Activated CD4-positive, alpha-beta memory T cell treated with anti-CD3 and anti-CD28 coated beads for 36 hours (primary cell): ENCODE measurements at regions of chr7 and their contacts with region 1.

Region 1: DNA sequence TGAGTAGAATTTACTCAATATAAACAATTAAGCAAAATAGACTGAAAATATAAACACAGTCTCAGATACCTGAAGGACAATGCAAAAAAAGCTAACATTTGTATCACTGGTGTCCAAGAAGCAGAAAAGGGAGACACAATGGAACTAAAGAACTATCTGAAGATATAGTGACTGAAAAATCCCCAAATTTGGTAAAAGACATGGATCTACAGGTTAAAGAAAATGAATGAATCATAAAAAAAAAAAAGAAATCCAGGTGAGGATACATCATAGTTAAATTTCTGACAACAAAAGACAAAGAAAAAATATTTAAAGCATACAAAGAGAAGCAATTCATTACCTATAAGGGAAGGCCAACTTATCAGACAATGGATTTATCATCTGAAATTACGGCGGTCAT is 114.7 kb upstream of the PPP1R3A start:
- DNase-seq: no peak
- H3K4me3 Mint-ChIP-seq: no peak overlapping the region
- H3K27ac Mint-ChIP-seq: no peak overlapping the region
- H3K4me1 Mint-ChIP-seq: no peaks in the 10 kb centered on the region
- H3K27me3 Mint-ChIP-seq: no peaks in the 10 kb centered on the region

Region 2: DNA sequence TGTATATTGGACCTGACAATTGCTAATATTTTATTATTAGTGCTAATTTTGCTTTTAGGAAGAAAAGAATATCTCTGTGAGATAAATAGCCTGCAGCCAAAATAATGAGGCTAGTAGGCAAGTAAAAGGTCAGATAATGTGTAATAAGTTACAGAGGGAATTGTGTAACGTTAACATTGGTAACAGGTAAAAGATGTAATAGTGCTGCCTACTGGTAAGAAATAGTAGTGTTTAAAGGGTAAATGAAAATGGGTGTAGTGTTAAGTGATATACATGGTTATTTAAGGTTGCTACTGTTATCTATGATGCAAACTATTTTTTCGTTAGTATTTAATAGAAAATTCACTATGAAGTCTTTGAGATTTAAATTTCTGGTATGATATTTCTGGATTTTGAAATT is 372.0 kb after region 1 on chr7:
- CTCF ChIA-PET with region 1: interaction called, 3 read pairs
- POLR2A ChIA-PET with region 1: no interaction called
- intact Hi-C with region 1: loop called (anchors 10 kb)
- DNase-seq: no peak
- H3K4me3 Mint-ChIP-seq: no peak overlapping the region
- H3K27ac Mint-ChIP-seq: no peak overlapping the region
- H3K4me1 Mint-ChIP-seq: no peaks in the 10 kb centered on the region
- H3K27me3 Mint-ChIP-seq: no peaks in the 10 kb centered on the region